Sigmoid colon (tissue), 7 donors: ENCODE measurements at regions of chr14 and their contacts with region 1.

Region 1: GRCh38 chr14:31207755-31208545 is at the start of gene HECTD1:
- DNase-seq: peak; percentile 95
- H3K4me3 ChIP-seq: peak within 1 kb of the TSS; percentile 61 to 93 (median 88)
- H3K27ac ChIP-seq: peak within 1 kb of the TSS; percentile 94 to 100 (median 99)
- H3K4me1 ChIP-seq: peaks cover 0 to 36% (median 14%) of the 10 kb centered on the region in 4 donors
- H3K27me3 ChIP-seq: no peaks in the 10 kb centered on the region
- CTCF ChIP-seq: peak in 2 of 4 experiments; percentile 23 to 86
- EP300 ChIP-seq: no peak
- POLR2A ChIP-seq: peak in 1 of 2 donors; percentile 43
- total RNA-seq, gene HECTD1: 152 to 186 (median 174) TPM

Region 2: DNA sequence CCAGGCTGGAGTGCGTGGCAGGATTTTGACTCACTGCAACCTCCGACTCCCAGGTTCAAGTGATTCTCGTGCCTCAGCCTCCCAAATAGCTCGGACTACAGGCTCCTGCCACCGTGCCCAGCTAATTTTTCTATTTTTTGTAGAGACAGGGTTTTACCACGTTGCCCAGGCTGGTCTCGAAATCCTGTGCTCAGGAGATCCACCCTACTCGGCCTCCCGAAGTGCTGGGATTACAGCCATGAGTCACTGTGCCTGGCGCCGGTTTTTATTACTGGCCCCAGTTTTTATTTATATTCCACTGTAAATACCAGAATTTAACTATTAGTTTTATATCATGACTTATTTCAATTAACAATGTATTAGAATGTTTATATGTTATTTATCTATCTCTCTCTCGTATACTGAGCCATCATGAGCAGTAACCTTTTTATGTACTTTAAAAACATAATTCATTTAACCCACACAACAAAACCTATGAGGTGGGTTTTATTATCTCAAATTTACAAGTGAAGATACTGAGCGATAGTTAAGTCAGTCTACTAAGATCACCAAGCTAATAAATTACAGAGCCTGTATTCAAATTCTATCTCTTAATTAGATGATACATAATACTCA is 48.2 kb before region 1 on chr14:
- intact Hi-C with region 1: loop called (anchors 2 kb)
- DNase-seq: peak; percentile 74
- H3K4me3 ChIP-seq: no peak overlapping the region
- H3K27ac ChIP-seq: peak overlapping the region; percentile 50 to 78 (median 68)
- H3K4me1 ChIP-seq: peaks cover 0 to 39% (median 36%) of the 10 kb centered on the region in 4 donors
- H3K27me3 ChIP-seq: no peaks in the 10 kb centered on the region
- CTCF ChIP-seq: no peak
- EP300 ChIP-seq: peak in 1 of 4 donors; percentile 6
- POLR2A ChIP-seq: no peak

Region 3: DNA sequence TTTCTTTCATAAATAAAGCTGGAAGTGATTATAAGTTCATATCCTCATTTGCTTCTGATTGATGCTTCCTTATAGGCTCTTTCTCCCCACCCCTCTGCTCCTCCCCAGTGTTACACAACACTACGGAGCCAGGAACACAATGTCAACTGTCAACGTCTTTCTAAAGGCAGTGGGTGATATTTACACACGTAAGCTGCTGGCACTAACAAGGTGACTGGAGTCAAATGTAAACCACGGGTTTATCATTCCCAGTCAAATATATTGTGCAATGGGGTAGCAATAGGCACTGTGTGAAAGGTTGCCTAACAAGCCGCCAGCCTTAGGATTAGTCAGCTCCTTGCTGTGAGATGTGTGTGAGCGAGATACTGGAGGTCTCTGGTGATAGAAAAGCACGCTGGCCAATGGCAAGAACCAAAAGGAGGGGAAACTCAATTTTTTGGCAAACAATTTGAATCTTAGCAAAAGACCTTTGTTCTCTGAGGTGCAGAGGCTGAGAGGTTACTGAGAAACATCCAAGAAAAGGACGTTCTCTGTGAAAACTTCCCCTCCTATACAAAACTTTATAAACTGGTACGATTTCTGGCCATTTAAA is 21.8 kb after region 1 on chr14:
- intact Hi-C with region 1: no loop called
- DNase-seq: peak; percentile 78
- H3K4me3 ChIP-seq: no peak overlapping the region
- H3K27ac ChIP-seq: peak overlapping the region in 2 of 4 donors; percentile 9 to 51
- H3K4me1 ChIP-seq: no peaks in the 10 kb centered on the region
- H3K27me3 ChIP-seq: no peaks in the 10 kb centered on the region
- CTCF ChIP-seq: no peak
- EP300 ChIP-seq: no peak
- POLR2A ChIP-seq: no peak

Region 4: GRCh38 chr14:31297701-31298344 is 89.9 kb after region 1 on chr14:
- intact Hi-C with region 1: loop called (anchors 10 kb)
- DNase-seq: no peak
- H3K4me3 ChIP-seq: no peak overlapping the region
- H3K27ac ChIP-seq: no peak overlapping the region
- H3K4me1 ChIP-seq: no peaks in the 10 kb centered on the region
- H3K27me3 ChIP-seq: no peaks in the 10 kb centered on the region
- CTCF ChIP-seq: no peak
- EP300 ChIP-seq: no peak
- POLR2A ChIP-seq: no peak

Region 5: DNA sequence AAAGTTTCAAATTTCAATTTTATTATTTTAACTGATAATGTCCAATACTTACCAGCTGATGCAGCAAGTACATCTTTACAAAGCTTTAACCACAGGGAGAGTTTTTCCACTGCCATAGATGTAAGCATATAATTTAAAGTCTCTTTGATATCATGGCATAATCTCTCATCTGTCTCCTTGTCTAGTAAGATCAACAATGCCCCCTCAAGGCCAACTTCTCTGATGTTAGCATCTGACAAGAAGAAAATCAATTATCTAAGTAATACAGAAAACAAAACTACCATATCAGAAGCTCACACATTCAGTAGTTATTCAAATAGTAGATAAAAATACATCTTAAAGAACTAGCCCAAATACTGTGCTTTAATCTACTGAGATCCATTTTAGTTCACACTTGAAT is 118.2 kb after region 1 on chr14:
- intact Hi-C with region 1: loop called (anchors 10 kb)
- DNase-seq: no peak
- H3K4me3 ChIP-seq: no peak overlapping the region
- H3K27ac ChIP-seq: no peak overlapping the region
- H3K4me1 ChIP-seq: no peaks in the 10 kb centered on the region
- H3K27me3 ChIP-seq: no peaks in the 10 kb centered on the region
- CTCF ChIP-seq: no peak
- EP300 ChIP-seq: no peak
- POLR2A ChIP-seq: no peak

Region 6: DNA sequence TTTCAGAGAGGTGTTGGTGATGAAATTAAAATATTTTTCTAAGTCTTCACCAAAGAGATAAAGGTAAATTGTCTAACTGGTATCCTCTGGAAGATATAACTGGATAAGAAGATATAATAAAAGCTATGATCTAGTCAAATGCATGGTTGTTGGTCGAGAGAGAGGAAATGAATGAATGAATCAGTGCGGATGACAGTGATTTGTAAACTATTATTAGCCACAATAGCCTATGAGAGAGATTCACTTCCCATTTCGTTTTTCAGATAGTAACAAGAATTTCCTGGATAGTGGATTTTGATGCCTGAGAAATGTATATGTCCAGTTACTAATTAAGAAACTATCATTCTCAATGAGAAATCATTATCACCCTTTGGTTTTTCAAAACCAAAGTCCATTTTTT is 149.3 kb after region 1 on chr14:
- intact Hi-C with region 1: loop called (anchors 5 kb)
- DNase-seq: no peak
- H3K4me3 ChIP-seq: no peak overlapping the region
- H3K27ac ChIP-seq: no peak overlapping the region
- H3K4me1 ChIP-seq: peaks cover 0 to 6% (median 2%) of the 10 kb centered on the region in 4 donors
- H3K27me3 ChIP-seq: no peaks in the 10 kb centered on the region
- CTCF ChIP-seq: no peak
- EP300 ChIP-seq: no peak
- POLR2A ChIP-seq: no peak